ENCODE measurements at regions of chr10 and their contacts with region 1.

Region 1: DNA sequence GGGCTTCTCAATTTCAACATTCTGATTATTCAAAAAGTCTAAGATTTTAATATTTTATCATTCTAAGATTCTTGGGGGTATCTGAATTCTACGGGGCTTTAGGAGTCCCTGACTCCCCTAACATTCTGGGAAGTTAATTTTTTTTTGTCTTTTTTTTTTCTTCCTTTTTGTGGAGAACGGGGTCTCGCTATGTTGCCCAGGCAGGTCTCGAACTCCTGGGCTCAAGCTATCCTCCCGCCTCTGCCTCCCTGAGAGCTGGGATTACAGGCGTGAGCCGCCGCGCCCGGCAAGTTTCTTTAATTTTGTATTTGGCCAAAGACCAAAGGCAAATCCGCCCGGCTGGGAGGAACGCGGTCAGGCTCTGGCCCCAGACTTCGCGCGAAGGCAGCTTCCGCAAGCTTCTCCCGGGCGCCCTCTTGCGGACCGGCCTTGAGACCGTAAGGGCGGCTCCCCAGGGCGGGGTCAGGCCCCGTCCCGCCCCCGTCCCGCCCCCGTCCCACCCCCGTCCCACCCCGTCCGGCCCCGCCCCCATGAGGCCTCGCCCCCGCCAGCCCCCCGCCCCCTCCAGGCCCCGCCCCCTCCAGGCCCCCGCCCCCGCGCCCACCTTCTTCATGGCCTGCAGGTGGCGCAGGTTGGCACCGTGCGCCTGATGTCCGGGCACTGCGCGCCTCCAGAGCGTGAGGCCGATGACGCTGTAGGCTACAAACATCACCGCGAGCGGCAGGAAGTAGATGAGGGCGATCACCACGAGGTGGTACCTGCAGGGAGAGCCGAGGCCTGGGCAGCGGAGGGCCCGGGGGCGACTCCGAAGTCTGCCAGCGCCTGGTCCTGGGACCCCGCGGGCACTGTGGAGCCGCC is 8.2 kb downstream of the TACR2 start:
- DNase-seq: peak; percentile 86
- H3K4me3 ChIP-seq: peak overlapping the region; percentile 34
- CTCF ChIP-seq: peak; percentile 62

Region 2: DNA sequence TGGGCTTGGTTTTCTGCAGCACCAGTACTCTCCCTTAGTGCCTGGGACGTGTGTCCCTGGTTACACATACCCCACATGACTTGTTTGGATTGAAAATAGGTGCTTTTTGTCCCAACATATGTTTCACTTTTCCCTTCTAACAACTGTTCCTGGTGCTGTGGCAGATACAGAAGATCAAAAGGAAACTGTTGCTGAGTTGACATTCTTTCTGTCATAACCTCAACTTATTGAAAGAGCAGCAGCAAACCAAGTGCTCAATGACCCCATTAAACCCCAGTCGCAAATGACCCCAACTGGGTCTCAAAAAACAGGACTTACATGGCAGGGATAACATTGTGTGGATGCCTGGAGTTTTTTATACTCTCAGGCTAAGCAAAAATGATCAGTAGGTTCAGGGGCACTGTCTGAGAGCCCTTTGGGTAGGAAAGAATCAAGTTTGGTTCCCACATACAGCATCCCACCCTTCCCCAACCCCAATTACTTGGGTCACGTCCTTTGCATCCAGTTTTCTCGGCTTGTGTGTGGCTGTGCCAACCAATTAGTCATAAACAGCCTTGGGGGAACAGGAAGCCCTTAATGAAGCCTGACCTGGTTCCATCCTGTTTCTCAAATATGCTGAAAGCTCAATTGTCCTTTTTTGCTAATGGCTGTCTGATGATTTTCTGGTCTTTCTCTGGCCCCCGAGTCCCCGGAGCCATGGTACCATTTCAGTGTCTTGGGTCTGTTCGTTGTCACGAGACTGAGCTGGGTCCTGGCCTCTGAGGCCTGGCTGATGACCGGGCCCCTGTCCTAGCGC is 183.5 kb before region 1 on chr10:
- in situ Hi-C with region 1: loop called (anchors 5 kb)
- DNase-seq: peak; percentile 9
- H3K4me3 ChIP-seq: no peak overlapping the region
- CTCF ChIP-seq: no peak

Region 3: DNA sequence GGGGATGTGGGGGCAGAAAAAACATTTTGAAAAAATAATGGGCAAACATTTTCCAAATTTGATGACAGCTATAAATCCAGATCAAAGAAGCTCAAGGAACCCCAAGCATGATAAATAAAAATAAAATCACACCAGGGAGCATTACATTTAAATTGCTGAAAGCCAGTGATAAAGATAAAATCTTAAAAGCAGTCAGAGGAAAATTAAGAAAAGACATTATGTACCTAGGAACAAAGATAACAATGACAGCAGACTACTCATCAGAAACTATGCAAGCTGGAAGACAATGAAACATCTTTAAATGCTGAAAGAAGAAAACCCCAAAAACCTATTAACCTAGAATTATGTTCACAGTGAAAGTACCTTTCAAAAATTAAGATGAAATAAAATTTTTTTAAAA is 141.4 kb after region 1 on chr10:
- in situ Hi-C with region 1: no loop called
- DNase-seq: no peak
- H3K4me3 ChIP-seq: no peak overlapping the region
- CTCF ChIP-seq: no peak

Region 4: GRCh38 chr10:69562731-69563259 is 154.2 kb after region 1 on chr10:
- in situ Hi-C with region 1: no loop called
- DNase-seq: no peak
- H3K4me3 ChIP-seq: no peak overlapping the region
- CTCF ChIP-seq: no peak

Region 5: GRCh38 chr10:69639291-69640195 is 231.0 kb after region 1 on chr10:
- in situ Hi-C with region 1: loop called (anchors 5 kb)
- DNase-seq: peak; percentile 55
- H3K4me3 ChIP-seq: no peak overlapping the region
- CTCF ChIP-seq: peak; percentile 87